ENCODE measurements at regions of chr4 and their contacts with region 1.

Region 1: DNA sequence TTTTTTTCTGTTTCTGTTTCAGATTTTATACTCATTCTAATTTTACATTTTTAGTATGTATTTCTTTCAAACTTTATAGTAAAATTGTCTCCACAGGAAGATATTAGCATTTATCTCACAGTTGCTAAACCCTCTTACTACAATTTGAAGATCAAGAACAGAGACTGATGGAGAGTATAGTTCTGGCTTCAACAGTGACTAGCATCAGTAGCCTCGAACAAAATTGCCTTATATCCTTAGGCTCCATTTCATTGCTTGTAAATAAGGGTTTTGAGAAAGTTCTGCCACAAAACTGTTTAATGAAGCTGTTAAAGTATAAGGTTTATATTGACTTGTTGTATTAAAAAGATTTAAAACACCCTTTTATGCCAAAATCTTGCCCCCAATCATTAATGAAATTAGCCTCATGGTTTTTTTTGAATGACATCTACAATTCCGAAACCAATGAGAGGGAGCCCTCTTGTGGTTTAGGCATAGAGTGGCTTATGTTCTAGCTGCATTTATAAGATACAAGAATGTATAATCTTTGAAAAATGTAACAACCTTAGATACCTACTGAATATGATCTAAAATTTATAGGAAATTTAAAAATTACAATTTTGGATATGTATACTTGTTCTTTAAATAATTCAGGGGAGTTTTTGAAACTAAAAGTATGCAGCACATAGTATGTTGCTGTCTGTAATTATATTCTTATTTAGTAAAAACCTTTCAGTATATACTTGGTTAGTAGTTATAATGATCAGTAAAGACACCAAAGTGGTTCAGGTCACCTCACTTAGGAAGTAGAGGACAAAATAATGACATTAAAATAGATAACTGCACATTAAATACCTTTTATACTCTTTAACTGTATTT is 109.8 kb upstream of the HPGD start:
- DNase-seq: peak; percentile 40
- H3K4me3 ChIP-seq: no peak overlapping the region
- H3K27ac ChIP-seq: no peak overlapping the region
- H3K27me3 ChIP-seq: no peaks in the 10 kb centered on the region
- CTCF ChIP-seq: peak; percentile 71

Region 2: GRCh38 chr4:174365018-174365587 is 267.0 kb before region 1 on chr4:
- in situ Hi-C with region 1: loop called (anchors 25 kb)
- DNase-seq: peak; percentile 7
- H3K4me3 ChIP-seq: no peak overlapping the region
- H3K27ac ChIP-seq: no peak overlapping the region
- H3K27me3 ChIP-seq: no peaks in the 10 kb centered on the region
- CTCF ChIP-seq: no peak